ENCODE measurements at regions of chr14 and their contacts with region 1.

Region 1: DNA sequence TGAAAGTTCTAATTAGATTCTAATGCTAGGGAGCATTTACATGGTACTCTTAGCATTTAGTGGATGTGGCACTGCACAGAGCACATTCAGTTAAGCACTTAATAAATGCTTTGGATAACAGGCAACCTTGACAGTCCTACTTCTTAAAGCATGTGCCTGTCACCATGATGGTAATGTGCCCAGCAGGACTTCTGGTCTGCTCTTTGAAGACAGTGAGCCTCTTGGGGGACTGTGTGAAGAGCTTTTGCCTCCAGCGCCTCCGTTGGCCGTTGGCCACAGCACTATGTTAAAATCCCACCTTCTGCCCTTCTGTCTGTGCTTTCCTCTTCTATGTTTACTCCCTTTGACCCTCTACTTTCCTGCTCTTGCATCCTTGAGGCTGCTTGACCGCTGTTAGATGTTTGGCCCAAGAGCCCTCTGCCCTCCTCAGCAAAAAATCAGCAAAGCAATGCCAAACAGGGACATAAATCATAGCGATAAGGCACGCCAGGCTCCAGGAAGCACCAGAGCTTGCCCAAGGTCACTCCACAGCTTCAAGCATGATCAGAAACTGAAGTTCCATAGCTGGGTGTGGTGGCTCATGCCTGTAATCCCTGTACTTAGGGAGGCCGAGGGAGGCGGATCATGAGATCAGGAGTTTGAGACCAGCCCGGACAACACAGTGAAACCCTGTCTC is 8.3 kb downstream of the CDKL1 start:
- DNase-seq: peak; percentile 74 to 88 (median 81)
- H3K4me3 ChIP-seq: no peak overlapping the region
- H3K27ac ChIP-seq: peak overlapping the region in 1 of 2 donors; percentile 55
- H3K4me1 ChIP-seq: peaks cover 8% of the 10 kb centered on the region
- H3K27me3 ChIP-seq: no peaks in the 10 kb centered on the region
- CTCF ChIP-seq: no peak
- EP300 ChIP-seq: no peak
- POLR2A ChIP-seq: no peak

Region 2: GRCh38 chr14:50198499-50198898 is 189.9 kb before region 1 on chr14:
- intact Hi-C with region 1: no loop called
- DNase-seq: no peak
- H3K4me3 ChIP-seq: no peak overlapping the region
- H3K27ac ChIP-seq: no peak overlapping the region
- H3K4me1 ChIP-seq: peaks cover 7% of the 10 kb centered on the region
- H3K27me3 ChIP-seq: no peaks in the 10 kb centered on the region
- CTCF ChIP-seq: no peak
- EP300 ChIP-seq: no peak
- POLR2A ChIP-seq: no peak

Region 3: GRCh38 chr14:50335389-50335788 is 53.0 kb before region 1 on chr14:
- intact Hi-C with region 1: loop called in 2 of 4 experiments (anchors 5 to 10 kb)
- DNase-seq: peak in 4 of 5 donors; percentile 46 to 64 (median 54)
- H3K4me3 ChIP-seq: no peak overlapping the region
- H3K27ac ChIP-seq: peak overlapping the region in 1 of 2 donors; percentile 59
- H3K4me1 ChIP-seq: peaks cover 24% of the 10 kb centered on the region
- H3K27me3 ChIP-seq: no peaks in the 10 kb centered on the region
- CTCF ChIP-seq: no peak
- EP300 ChIP-seq: no peak
- POLR2A ChIP-seq: no peak

Region 4: DNA sequence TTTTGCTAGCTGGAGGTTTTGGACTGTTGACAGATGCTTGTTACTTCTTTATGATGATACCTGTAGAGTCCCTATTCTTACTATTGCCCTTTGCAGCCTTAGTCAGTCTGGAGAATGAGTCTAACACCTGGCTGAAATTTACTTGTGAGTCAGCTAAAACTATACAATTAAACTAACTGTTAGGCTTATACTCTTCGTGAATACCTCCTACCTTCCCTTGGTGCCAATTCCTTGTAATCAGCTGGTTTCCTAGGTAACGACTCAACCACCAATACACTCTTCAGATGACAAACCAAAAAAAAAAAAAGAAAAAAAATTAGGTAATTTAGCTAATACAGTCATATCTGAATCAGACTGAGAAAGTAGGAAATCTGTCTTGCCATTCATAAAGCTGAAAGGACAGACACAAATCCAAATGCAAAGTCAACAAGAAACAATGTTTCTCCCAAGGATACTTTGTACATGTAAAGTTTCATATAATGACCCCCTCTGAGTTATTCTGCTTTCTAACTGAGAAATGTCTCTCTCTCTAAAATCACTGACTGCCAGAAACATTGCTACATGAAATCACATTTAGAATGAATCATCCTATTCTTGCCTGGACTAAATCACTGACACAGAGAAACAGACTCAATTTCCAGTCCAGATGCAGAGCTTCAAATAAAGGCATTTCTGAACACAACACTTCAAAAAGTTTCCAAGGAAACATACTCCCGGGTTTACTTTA is 64.7 kb after region 1 on chr14:
- intact Hi-C with region 1: no loop called
- DNase-seq: no peak
- H3K4me3 ChIP-seq: no peak overlapping the region
- H3K27ac ChIP-seq: no peak overlapping the region
- H3K4me1 ChIP-seq: peaks cover 2% of the 10 kb centered on the region
- H3K27me3 ChIP-seq: no peaks in the 10 kb centered on the region
- CTCF ChIP-seq: no peak
- EP300 ChIP-seq: no peak
- POLR2A ChIP-seq: no peak

Region 5: DNA sequence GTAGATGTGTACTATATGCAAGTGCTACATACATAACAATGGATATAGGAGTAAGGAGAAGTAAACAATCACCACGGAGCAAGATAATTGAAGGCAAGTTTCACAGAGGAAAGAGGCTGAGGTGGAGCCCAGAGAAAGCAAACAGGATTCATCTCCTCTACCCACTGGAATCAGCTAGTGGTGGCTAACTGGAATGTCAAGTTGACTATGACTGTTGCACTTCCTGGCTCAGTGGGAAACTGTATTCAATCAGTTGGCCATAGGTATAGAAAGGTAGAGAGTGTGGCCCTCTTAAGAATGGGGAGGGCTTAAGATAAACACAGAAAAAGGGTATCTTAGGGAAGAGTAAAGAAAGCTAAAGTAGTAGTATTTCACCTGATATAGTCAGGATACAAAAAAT is 81.6 kb after region 1 on chr14:
- intact Hi-C with region 1: loop called in 1 of 4 experiments (anchors 5 kb)
- DNase-seq: no peak
- H3K4me3 ChIP-seq: no peak overlapping the region
- H3K27ac ChIP-seq: no peak overlapping the region
- H3K4me1 ChIP-seq: peaks cover 2% of the 10 kb centered on the region
- H3K27me3 ChIP-seq: no peaks in the 10 kb centered on the region
- CTCF ChIP-seq: no peak
- EP300 ChIP-seq: no peak
- POLR2A ChIP-seq: no peak

Measured in ovary (tissue), 10 donors.